ENCODE measurements at regions of chr9 and their contacts with region 1.

Region 1: DNA sequence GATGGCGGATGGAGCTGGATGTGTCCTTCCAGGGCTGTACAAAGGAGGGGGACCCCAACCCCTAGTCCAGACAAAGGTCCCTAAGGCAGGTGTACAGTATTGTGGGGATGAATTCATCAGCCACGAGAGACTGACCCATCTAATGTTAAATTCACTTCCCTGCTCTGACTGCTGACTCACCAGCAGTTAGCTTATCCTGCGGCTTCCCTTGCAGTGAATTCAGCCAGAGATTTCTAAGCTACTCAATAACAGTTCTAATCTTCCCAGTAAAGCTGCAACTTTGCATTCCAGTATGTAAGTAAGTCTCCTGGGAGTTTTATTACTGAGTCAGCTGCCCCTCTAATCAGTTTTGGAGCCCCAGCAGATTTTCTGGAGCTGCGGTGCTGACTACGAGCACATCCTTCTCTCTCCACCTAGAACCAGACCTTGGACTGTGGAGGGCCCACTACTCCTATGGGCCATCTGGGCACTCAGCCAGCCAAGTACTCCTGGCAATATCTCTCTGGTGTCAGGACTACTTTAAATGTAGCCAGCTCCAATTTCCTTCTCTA is 16.1 kb downstream of the B4GALT1 start:
- H3K4me3 ChIP-seq: no peak overlapping the region
- H3K27ac ChIP-seq: peak overlapping the region; percentile 18; the same call in 1 of the 2 replicates
- H3K4me1 ChIP-seq: peaks cover 13% of the 10 kb centered on the region; the same call in 1 of the 2 replicates
- CTCF ChIP-seq: no peak

Region 2: DNA sequence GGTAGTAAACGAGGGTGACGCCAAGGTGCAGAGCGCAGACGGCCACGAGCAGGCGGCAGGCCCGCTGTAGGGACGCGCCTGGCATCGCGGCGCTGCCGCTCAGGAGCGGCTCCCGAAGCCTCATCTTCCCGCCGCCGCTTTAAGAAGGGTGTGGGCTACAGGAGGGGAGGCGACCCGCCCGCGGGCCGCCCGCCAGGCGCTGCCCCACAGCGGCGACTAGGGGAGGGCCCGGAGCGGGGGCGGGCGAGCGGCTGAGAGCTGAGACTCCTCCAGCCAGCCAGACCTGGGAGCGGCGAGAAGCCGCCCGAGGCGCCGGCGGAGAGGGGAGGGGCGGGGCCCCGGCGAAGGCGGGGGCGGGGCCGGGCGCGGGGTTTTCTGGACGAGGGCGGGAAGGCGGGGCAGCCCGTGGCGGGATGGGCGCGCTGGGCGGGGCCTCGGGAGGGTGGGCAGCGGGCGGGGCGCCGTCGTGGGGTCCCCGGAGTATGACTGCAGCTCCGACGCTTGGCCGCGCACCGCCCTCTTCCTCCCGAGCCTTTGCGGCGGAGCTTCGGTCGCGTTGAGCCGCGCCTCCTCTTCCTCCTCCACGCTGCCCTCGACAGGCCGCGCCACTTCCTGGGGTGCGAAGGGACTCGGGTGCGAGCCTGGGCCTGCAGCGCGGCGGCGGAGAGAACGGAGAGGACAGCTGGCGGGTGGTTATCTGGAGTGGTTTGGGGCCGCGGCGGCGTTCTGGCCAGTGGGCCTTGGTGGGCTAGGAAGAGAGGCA is 16.1 kb after region 1 on chr9 and contains the start of gene B4GALT1:
- CTCF ChIA-PET with region 1: interaction called, 4 read pairs
- POLR2A ChIA-PET with region 1: interaction called, 33 read pairs
- H3K4me3 ChIP-seq: peak within 1 kb of the TSS; percentile 82
- H3K27ac ChIP-seq: peak within 1 kb of the TSS; percentile 88
- H3K4me1 ChIP-seq: peaks cover 12% of the 10 kb centered on the region; the same call in 1 of the 2 replicates
- CTCF ChIP-seq: peak; percentile 8

Measured in HEK293 (cell line).